Heart left ventricle (tissue), 16 donors: ENCODE measurements at regions of chr10 and their contacts with region 1.

Region 1: GRCh38 chr10:89426230-89426868 is 12.0 kb downstream of the IFIT5 start:
- DNase-seq: no peak
- ATAC-seq: peak in 3 of 4 donors; percentile 74 to 79 (median 78)
- H3K4me3 ChIP-seq: no peak overlapping the region
- H3K27ac ChIP-seq: no peak overlapping the region
- H3K4me1 ChIP-seq: peaks cover 0 to 28% (median 8%) of the 10 kb centered on the region in 12 donors
- H3K27me3 ChIP-seq: no peaks in the 10 kb centered on the region
- CTCF ChIP-seq: peak; percentile 65 to 93 (median 84)
- POLR2A ChIP-seq: no peak

Region 2: DNA sequence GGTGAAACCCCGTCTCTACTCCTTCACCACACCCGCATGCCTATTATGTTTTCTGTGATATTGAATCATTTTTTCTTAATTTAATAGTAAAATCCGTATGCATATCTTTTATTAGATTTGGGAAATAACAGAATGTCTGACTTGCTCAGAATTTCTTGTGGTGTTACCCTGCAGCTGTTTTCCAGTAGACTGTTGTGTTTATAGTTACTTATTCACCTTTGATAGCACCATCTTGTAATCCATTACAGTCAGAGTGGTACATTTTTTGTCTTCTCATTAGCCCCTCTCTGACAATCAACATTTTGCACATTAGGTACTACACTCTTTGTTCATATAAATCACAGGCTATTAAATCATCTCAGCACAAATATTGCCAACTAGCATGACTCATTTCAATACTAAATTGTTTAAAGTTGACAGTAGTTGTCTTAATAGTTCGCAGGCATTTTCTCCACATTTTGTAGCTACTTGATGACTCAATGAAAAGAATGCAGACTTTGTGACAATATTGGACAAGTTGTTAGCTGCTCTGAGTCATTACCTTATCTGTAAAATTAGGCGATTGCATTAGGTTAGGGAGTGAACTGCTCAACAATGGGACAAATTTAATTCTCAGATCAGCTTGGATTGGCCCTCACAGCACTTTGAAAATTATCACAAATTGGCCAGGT is 126.8 kb after region 1 on chr10:
- intact Hi-C with region 1: loop called in 5 of 10 experiments (anchors 2 kb)
- DNase-seq: no peak
- ATAC-seq: peak in 3 of 4 donors; percentile 36 to 84 (median 64)
- H3K4me3 ChIP-seq: no peak overlapping the region
- H3K27ac ChIP-seq: peak overlapping the region in 1 of 12 donors; percentile 13
- H3K4me1 ChIP-seq: peaks cover 0 to 8% (median 0%) of the 10 kb centered on the region in 12 donors
- H3K27me3 ChIP-seq: no peaks in the 10 kb centered on the region
- CTCF ChIP-seq: no peak
- POLR2A ChIP-seq: no peak

Region 3: GRCh38 chr10:89701238-89702120 is 275.1 kb after region 1 on chr10 and contains the start of gene KIF20B:
- intact Hi-C with region 1: loop called in 6 of 10 experiments (anchors 5 to 10 kb)
- DNase-seq: peak; percentile 96 to 98 (median 97)
- ATAC-seq: peak; percentile 100
- H3K4me3 ChIP-seq: peak within 1 kb of the TSS; percentile 40 to 85 (median 71)
- H3K27ac ChIP-seq: peak within 1 kb of the TSS; percentile 54 to 90 (median 86)
- H3K4me1 ChIP-seq: peaks cover 0 to 18% (median 6%) of the 10 kb centered on the region in 12 donors
- H3K27me3 ChIP-seq: no peaks in the 10 kb centered on the region
- CTCF ChIP-seq: peak; percentile 36 to 74 (median 57)
- POLR2A ChIP-seq: peak in 1 of 2 donors; percentile 68
- total RNA-seq, gene KIF20B: 0.95 to 8.6 (median 2.4) TPM

Region 4: GRCh38 chr10:90306187-90306586 is 879.8 kb after region 1 on chr10:
- intact Hi-C with region 1: no loop called
- DNase-seq: no peak
- ATAC-seq: peak in 2 of 4 donors; percentile 47 to 62
- H3K4me3 ChIP-seq: no peak overlapping the region
- H3K27ac ChIP-seq: no peak overlapping the region
- H3K4me1 ChIP-seq: no peaks in the 10 kb centered on the region
- H3K27me3 ChIP-seq: no peaks in the 10 kb centered on the region
- CTCF ChIP-seq: no peak
- POLR2A ChIP-seq: no peak

Region 5: DNA sequence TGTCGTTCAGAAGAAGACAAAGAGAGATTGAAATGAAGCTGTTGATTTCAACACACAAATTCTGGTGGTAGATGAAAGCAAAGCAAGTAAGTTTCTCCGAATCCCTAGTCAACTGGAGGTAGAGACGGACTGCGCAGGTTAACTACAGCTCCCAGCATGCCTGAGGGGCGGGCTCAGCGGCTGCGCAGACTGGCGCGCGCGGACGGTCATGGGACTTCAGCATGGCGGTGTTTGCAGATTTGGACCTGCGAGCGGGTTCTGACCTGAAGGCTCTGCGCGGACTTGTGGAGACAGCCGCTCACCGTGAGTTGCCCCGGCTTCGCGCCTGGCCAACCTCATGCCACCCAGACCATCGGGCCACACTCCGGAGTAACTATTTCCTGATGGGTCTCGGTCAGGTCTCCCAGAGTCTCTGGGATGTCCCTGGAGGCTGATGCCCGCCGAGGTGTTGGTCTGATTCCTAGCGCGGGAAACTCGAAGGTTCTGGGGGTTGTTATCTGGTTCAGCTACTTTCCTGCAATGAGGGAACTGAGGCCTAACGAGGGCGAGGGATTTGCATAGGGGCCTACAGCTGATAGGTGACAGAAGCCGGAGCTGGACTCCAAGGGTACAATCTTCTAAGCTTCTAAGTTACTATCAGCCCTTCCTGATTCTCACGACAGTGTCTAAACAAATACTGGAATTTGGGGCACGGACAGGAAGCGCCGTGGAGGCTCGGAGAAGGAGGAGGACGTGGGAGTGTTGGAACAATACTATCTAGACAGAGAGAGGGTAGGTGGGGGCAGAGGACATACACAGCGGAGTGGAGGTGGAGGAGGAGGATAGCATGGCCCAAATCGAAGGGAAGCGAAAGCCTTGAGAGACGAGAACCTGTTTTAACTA is 1445.7 kb after region 1 on chr10 and contains the start of gene RPP30:
- intact Hi-C with region 1: loop called in 1 of 10 experiments (anchors 10 kb)
- DNase-seq: peak; percentile 83 to 92 (median 86)
- ATAC-seq: peak; percentile 97 to 99 (median 98)
- H3K4me3 ChIP-seq: peak within 1 kb of the TSS; percentile 66 to 98 (median 80)
- H3K27ac ChIP-seq: peak within 1 kb of the TSS; percentile 24 to 78 (median 64)
- H3K4me1 ChIP-seq: peaks cover 0 to 27% (median 14%) of the 10 kb centered on the region in 12 donors
- H3K27me3 ChIP-seq: no peaks in the 10 kb centered on the region
- CTCF ChIP-seq: no peak
- POLR2A ChIP-seq: peak in 1 of 2 donors; percentile 21
- total RNA-seq, gene RPP30: 26.4 to 39.9 (median 29.7) TPM